H1 (cell line): ENCODE measurements at regions of chr15 and their contacts with region 1.

Region 1: GRCh38 chr15:68316061-68316804 is 38.7 kb downstream of the FEM1B start:
- DNase-seq: peak in 1 of 2 experiments; percentile 72
- H3K4me3 ChIP-seq: peak overlapping the region in 1 of 4 experiments; percentile 25; a peak in 1 of 8 replicates
- H3K27ac ChIP-seq: no peak overlapping the region
- H3K4me1 ChIP-seq: peaks cover 0 to 20% (median 15%) of the 10 kb centered on the region in 4 experiments; a peak in 6 of 7 replicates
- H3K27me3 ChIP-seq: no peaks in the 10 kb centered on the region
- CTCF ChIP-seq: peak; percentile 75 to 82 (median 77)
- EP300 ChIP-seq: no peak
- POLR2A ChIP-seq: no peak
- RAD21 ChIP-seq: peak; percentile 51 to 68

Region 2: DNA sequence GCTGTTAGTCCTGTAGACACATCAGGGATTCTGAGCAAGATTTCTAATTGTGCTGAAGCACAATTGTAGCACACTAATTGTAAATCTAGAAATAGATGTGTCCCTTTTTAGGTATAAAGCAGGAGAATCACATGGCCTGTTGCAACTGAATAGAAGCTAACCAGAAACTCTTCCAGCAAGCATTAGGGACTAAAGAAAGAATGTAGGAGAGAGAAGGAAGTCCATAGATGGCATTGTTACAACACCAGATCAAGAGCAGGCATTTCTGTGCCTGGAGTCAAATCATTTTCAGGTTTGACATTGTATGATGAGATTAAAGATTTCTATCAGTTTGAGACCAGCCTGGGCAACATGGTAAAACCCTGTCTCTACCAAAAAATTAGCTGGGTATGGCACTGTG is 138.5 kb before region 1 on chr15:
- CTCF ChIA-PET with region 1: no interaction called
- POLR2A ChIA-PET with region 1: no interaction called
- DNase-seq: no peak
- H3K4me3 ChIP-seq: no peak overlapping the region
- H3K27ac ChIP-seq: no peak overlapping the region
- H3K4me1 ChIP-seq: no peaks in the 10 kb centered on the region
- H3K27me3 ChIP-seq: no peaks in the 10 kb centered on the region
- CTCF ChIP-seq: no peak
- EP300 ChIP-seq: no peak
- POLR2A ChIP-seq: no peak
- RAD21 ChIP-seq: no peak

Region 3: GRCh38 chr15:68252925-68253534 is 63.2 kb before region 1 on chr15:
- CTCF ChIA-PET with region 1: interaction called, 16 read pairs
- POLR2A ChIA-PET with region 1: interaction called, 4 read pairs
- DNase-seq: no peak
- H3K4me3 ChIP-seq: no peak overlapping the region
- H3K27ac ChIP-seq: no peak overlapping the region
- H3K4me1 ChIP-seq: peaks cover 0 to 8% (median 6%) of the 10 kb centered on the region in 4 experiments; a peak in 4 of 7 replicates
- H3K27me3 ChIP-seq: no peaks in the 10 kb centered on the region
- CTCF ChIP-seq: peak in 2 of 3 experiments; percentile 72 to 83; a peak in 3 of 4 replicates
- EP300 ChIP-seq: no peak
- POLR2A ChIP-seq: no peak
- RAD21 ChIP-seq: peak; percentile 91 to 93

Region 4: GRCh38 chr15:68328443-68328842 is 12.2 kb after region 1 on chr15:
- CTCF ChIA-PET with region 1: interaction called, 15 read pairs
- POLR2A ChIA-PET with region 1: interaction called, 3 read pairs
- DNase-seq: no peak
- H3K4me3 ChIP-seq: no peak overlapping the region
- H3K27ac ChIP-seq: no peak overlapping the region
- H3K4me1 ChIP-seq: peaks cover 2 to 18% (median 8%) of the 10 kb centered on the region in 4 experiments
- H3K27me3 ChIP-seq: no peaks in the 10 kb centered on the region
- CTCF ChIP-seq: no peak
- EP300 ChIP-seq: no peak
- POLR2A ChIP-seq: no peak
- RAD21 ChIP-seq: no peak

Region 5: DNA sequence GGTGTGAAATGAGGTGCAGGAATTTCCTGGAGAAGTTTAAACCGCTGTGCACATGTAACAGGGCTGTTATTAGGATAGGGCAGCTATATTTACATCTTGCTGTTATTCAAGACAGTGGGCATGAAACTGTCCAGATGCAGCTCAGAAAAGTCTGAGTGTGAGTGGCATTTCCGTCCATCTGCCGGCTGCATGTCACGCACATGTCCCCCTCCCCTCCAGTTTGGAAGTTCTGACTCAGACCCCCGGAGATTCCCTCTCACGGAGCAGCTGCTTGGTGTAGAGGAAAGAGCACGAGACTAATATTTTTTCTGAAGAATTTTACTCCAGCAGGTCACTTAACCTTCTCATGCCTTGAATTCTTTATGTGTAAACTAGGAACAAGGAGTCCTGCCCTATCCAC is 31.2 kb after region 1 on chr15:
- CTCF ChIA-PET with region 1: interaction called, 12 read pairs
- POLR2A ChIA-PET with region 1: no interaction called
- DNase-seq: no peak
- H3K4me3 ChIP-seq: no peak overlapping the region
- H3K27ac ChIP-seq: no peak overlapping the region
- H3K4me1 ChIP-seq: no peaks in the 10 kb centered on the region; a peak in 1 of 7 replicates
- H3K27me3 ChIP-seq: no peaks in the 10 kb centered on the region
- CTCF ChIP-seq: no peak
- EP300 ChIP-seq: no peak
- POLR2A ChIP-seq: no peak
- RAD21 ChIP-seq: no peak

Region 6: GRCh38 chr15:68372291-68372811 is 56.1 kb after region 1 on chr15:
- CTCF ChIA-PET with region 1: interaction called, 12 read pairs
- POLR2A ChIA-PET with region 1: no interaction called
- DNase-seq: peak in 1 of 2 experiments; percentile 73
- H3K4me3 ChIP-seq: no peak overlapping the region
- H3K27ac ChIP-seq: no peak overlapping the region
- H3K4me1 ChIP-seq: no peaks in the 10 kb centered on the region
- H3K27me3 ChIP-seq: no peaks in the 10 kb centered on the region
- CTCF ChIP-seq: peak; percentile 58 to 76 (median 58)
- EP300 ChIP-seq: no peak
- POLR2A ChIP-seq: no peak
- RAD21 ChIP-seq: peak; percentile 41 to 62